HEK293T (cell line): ENCODE measurements at regions of chr1 and their contacts with region 1.

Region 1: DNA sequence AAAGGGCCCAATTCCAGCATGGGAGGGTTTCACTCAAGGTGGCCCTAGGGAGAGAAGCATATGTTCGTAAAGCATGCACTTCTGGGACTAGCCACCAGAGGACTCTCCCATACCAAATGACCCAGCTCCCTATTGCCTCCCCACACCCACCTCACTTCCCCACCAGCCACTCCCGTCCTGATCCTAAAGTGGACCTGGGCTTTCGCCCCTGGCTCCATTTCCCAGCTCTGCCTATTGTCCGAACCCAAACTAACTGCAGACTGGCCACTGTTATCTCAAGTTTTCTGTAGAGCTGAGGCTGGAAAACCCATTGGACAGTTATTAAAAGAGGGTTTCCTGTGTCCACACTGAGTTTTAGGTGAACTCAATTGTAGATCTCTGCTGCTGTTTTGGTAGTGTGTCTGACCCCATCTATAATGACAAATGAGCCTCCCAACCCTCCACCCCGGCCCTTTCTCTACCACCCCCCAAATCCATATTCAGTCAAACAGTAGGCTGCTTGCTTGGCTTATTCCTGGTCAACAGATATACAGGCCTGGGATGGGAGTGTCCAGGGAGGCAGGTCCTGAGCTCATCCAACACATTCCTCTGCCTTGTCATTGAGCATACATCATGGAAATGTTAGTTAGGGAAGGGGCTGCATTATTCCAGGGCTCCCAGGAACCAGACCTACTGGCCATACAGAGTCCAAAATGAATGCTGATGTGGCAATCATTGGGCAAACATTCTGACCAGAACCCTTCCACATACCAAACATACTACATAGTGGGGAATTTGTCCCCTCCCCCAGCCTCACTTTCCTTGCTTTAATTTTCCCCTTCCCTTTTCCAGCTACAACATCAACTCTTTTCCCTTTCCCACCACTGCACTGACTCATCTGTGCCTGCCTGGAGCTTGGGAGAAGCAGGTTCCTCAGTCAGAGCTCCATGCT is 59.2 kb downstream of the ABCA4 start:
- DNase-seq: peak; percentile 91

Region 2: GRCh38 chr1:94237291-94238226 is 175.8 kb after region 1 on chr1 and contains the start of gene ARHGAP29:
- CTCF ChIA-PET with region 1: interaction called, 12 read pairs
- POLR2A ChIA-PET with region 1: interaction called, 10 read pairs
- DNase-seq: peak; percentile 93

Region 3: GRCh38 chr1:94329986-94330385 is 268.2 kb after region 1 on chr1:
- CTCF ChIA-PET with region 1: interaction called, 93 read pairs
- POLR2A ChIA-PET with region 1: interaction called, 4 read pairs
- DNase-seq: no peak